ENCODE measurements at regions of chr17 and their contacts with region 1.

Region 1: GRCh38 chr17:73956669-73957465 is 246.6 kb upstream of the RPL38 start:
- DNase-seq: peak; percentile 27 to 85 (median 78)
- H3K4me3 ChIP-seq: no peak overlapping the region
- H3K27ac ChIP-seq: no peak overlapping the region
- H3K27me3 ChIP-seq: peaks cover 0 to 4% (median 0%) of the 10 kb centered on the region in 45 donors
- CTCF ChIP-seq: peak; percentile 13 to 85 (median 70)

Region 2: DNA sequence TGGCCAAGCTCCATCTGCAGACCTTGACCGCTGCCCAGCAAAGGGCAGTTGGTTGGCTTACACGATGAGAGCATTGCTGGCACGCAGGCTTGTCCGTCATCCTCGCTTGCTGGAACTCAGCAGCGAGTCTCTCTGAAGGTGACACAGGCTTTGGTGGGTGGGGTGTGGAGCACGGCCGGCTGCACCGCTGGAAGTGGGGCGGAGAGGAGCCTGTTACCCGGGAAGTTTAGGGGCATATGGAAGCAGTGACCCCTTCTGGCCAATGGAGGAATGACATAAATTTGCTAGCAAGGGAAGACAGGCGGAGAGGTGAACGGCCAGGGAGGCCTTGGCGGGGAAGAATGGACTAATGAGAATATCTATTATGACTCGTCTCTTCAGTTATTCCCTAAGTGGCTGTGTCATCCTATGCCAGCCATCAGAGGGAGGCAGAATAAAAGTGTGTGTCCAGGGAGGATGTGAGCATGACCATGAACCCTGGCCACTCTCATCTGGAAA is 246.7 kb before region 1 on chr17:
- intact Hi-C with region 1: loop called in 1 of 2 experiments (anchors 5 kb)
- DNase-seq: peak in 6 of 10 donors; percentile 38 to 59 (median 48)
- H3K4me3 ChIP-seq: peak overlapping the region in 1 of 59 donors; percentile 42
- H3K27ac ChIP-seq: no peak overlapping the region
- H3K27me3 ChIP-seq: peaks cover 0 to 25% (median 0%) of the 10 kb centered on the region in 45 donors
- CTCF ChIP-seq: peak; percentile 65 to 93 (median 81)

Measured in dorsolateral prefrontal cortex (tissue), 120 donors.